Common myeloid progenitor, CD34-positive (primary cell): ENCODE measurements at regions of chr2 and their contacts with region 1.

Region 1: GRCh38 chr2:64488050-64488974 is 34.4 kb downstream of the LGALSL start:
- DNase-seq: peak; percentile 68 to 83 (median 74)
- H3K4me3 ChIP-seq: no peak overlapping the region
- H3K27ac ChIP-seq: no peak overlapping the region
- H3K4me1 ChIP-seq: peaks cover 3 to 8% (median 5%) of the 10 kb centered on the region in 4 experiments
- H3K27me3 ChIP-seq: peaks cover 0 to 27% (median 10%) of the 10 kb centered on the region in 5 experiments

Region 2: DNA sequence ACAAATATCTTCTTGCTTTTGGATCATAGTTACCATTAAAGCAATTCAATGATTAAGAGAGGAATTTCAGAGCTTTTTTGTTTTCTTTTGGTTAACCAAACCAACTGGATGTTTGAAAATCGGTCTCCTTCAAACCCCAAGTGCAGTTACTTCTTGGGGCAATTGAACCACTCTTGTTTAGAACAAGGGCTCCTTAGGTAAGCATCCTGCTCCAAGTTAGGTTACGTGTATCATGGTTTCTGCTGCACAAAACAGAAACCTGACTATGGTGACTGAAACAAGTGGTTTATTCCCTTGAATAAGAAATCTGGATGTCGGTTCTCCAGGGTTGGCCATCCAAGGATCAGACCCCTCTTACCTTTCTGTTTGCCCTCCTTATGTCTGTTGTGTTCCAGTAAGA is 50.4 kb before region 1 on chr2:
- CTCF ChIA-PET with region 1: no interaction called
- POLR2A ChIA-PET with region 1: no interaction called
- DNase-seq: no peak
- H3K4me3 ChIP-seq: no peak overlapping the region
- H3K27ac ChIP-seq: no peak overlapping the region
- H3K4me1 ChIP-seq: no peaks in the 10 kb centered on the region
- H3K27me3 ChIP-seq: peaks cover 0 to 11% (median 0%) of the 10 kb centered on the region in 5 experiments

Region 3: DNA sequence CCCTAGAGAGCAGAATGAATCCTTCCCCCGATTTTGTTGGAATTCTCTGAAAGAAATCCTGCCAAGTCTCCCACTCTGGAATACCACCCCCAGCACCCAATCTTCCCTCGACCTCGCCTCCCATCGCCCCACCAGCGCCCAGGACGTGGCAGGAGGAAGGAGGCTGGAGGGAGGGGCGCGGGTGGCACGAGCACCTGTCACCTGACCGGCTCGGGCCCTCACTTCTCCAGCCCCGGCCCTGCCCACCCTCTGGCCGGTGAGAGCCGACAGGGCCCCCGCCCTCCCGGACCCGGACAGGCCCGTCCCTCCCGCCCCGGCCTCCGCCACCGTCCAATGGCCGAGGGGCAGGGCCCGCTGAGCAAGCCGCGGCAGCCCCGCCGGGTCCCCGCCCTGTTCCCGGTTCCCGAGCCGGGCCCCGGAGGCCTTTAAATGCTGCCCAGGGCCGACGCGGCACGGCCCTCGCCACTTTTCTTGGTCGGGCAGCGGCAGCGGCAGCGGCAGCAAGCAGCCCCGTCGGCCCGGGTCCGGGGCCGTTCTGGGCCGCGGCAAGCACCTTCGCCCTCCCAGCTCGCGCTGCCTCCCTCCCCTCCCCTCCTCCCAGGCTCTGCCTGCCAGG is 34.4 kb before region 1 on chr2 and contains the start of gene LGALSL:
- CTCF ChIA-PET with region 1: interaction called, 40 read pairs
- POLR2A ChIA-PET with region 1: no interaction called
- DNase-seq: peak; percentile 46 to 76 (median 66)
- H3K4me3 ChIP-seq: peak within 1 kb of the TSS; percentile 60 to 80 (median 73)
- H3K27ac ChIP-seq: no peak within 1 kb of the TSS
- H3K4me1 ChIP-seq: peaks cover 0 to 21% (median 13%) of the 10 kb centered on the region in 4 experiments
- H3K27me3 ChIP-seq: peaks cover 0 to 7% (median 0%) of the 10 kb centered on the region in 5 experiments

Region 4: DNA sequence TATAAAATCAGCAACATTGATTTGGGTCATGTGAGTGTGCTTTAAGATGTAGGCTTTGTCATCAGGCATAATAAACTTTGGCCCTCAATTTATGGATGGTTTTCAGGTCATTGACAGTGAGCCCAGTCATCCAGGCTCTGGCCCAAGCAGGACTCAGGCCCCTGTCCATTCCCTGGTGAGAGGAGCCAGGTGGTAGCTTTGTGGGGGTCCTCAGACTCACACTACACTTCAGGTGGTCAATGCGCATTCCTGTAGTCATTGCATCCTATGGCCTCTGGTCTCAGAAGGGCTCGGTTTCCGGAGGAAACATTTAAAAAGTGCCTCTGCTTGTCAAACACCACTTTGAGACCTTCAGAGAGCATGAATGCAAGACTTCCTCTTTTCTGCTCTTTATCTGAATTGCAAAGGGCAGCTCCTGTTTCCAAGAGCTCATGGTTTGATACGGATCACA is 14.2 kb before region 1 on chr2:
- CTCF ChIA-PET with region 1: interaction called, 17 read pairs
- POLR2A ChIA-PET with region 1: no interaction called
- DNase-seq: peak; percentile 70 to 91 (median 87)
- H3K4me3 ChIP-seq: peak overlapping the region in 1 of 7 experiments; percentile 29
- H3K27ac ChIP-seq: no peak overlapping the region
- H3K4me1 ChIP-seq: peaks cover 2 to 22% (median 17%) of the 10 kb centered on the region in 4 experiments
- H3K27me3 ChIP-seq: no peaks in the 10 kb centered on the region

Region 5: DNA sequence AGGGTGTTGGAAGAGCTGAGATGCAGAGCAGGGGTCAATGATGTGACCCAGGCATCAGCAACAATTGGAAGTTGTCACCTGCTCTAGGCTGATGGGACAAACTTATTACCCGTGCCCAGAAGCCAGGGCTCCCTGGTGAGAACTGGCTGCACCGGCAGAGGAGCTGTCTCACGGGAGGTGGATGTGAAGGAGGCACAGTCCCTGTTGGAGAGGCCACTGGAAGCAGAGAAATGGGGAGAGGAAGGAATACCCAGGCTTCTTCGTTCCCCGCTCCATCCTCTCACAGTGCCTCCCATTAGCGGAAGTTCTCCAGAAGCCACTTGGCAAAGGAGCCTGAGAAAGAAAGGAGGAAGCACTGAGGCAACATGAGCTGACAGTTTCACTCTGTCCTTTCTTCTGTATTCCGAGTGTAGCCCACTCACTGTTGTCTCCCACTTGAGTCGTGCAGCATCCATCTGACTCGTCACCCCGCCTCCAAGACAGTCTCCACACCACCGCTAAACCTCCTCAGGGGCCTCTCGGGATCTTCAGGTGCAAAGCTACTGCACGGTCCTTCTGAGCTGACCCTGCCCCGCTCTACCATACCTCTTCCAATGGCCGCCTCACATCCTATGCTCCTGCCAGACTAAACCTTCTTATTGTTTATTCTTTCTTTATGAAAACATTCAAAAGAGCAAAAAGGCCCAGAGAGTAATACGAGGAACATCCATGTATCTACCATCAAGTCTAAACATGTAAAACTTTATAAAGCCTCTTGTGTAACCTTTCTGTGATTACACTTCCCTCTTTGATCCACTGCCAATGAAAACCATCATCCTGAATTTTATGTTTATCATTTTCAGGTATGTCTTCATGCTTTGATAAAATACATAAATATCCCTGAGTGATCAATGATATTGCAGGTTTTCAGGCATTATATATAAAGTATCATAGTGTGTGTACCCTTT is 16.7 kb after region 1 on chr2:
- CTCF ChIA-PET with region 1: interaction called, 23 read pairs
- POLR2A ChIA-PET with region 1: no interaction called
- DNase-seq: no peak
- H3K4me3 ChIP-seq: no peak overlapping the region
- H3K27ac ChIP-seq: no peak overlapping the region
- H3K4me1 ChIP-seq: no peaks in the 10 kb centered on the region
- H3K27me3 ChIP-seq: peaks cover 0 to 3% (median 0%) of the 10 kb centered on the region in 5 experiments